WTC11 (cell line): ENCODE measurements at regions of chr19 and their contacts with region 1.

Region 1: DNA sequence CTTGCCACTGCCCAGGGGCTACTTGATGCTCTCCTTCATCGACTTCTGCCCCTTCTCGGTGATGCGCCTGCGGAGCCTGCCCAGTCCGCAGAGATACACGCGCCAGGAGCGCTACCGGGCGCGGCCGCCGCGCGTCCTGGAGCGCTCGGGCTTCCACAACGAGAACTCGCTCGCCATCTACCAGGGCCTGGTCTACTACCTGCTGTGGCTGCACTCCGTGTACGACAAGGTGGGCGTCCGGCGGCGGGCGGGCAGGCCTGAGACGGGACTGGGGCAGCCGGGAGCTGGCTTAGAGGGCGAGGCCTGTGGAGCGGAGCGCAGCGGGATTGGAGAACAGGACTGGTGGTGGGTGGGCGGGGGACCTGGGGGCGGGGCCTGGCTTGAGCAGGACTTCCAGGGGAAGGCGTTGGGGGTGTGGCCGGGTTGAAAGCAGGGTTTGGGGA is 12.7 kb upstream of the PSMD8 start:
- DNase-seq: peak; percentile 94
- ATAC-seq: peak; percentile 79
- H3K4me3 Mint-ChIP-seq: peak overlapping the region; percentile 86
- H3K27ac Mint-ChIP-seq: peak overlapping the region; percentile 93
- H3K4me1 Mint-ChIP-seq: peaks cover 10% of the 10 kb centered on the region
- H3K27me3 Mint-ChIP-seq: peaks cover 66% of the 10 kb centered on the region
- CTCF ChIP-seq: no peak

Region 2: GRCh38 chr19:38224014-38224862 is 137.4 kb before region 1 on chr19 and contains the start of gene DPF1:
- CTCF ChIA-PET with region 1: no interaction called
- POLR2A ChIA-PET with region 1: no interaction called
- DNase-seq: peak; percentile 92
- ATAC-seq: peak; percentile 83
- H3K4me3 Mint-ChIP-seq: peak within 1 kb of the TSS; percentile 80
- H3K27ac Mint-ChIP-seq: peak within 1 kb of the TSS; percentile 50
- H3K4me1 Mint-ChIP-seq: peaks cover 25% of the 10 kb centered on the region
- H3K27me3 Mint-ChIP-seq: peaks cover 15% of the 10 kb centered on the region
- CTCF ChIP-seq: no peak
- total RNA-seq, gene DPF1: 5.2 to 6.8 TPM (median 5.9 TPM) in 3 replicates

Region 3: GRCh38 chr19:38374429-38375176 is 12.9 kb after region 1 on chr19 and contains the start of gene PSMD8:
- CTCF ChIA-PET with region 1: interaction called, 19 read pairs
- POLR2A ChIA-PET with region 1: interaction called, 16 read pairs
- DNase-seq: peak; percentile 99
- ATAC-seq: peak; percentile 99
- H3K4me3 Mint-ChIP-seq: peak within 1 kb of the TSS; percentile 100
- H3K27ac Mint-ChIP-seq: peak within 1 kb of the TSS; percentile 75
- H3K4me1 Mint-ChIP-seq: peaks cover 14% of the 10 kb centered on the region
- H3K27me3 Mint-ChIP-seq: peaks cover 25% of the 10 kb centered on the region
- CTCF ChIP-seq: no peak
- total RNA-seq, gene PSMD8: 156 to 167 TPM (median 160 TPM) in 3 replicates